Activated naive CD8-positive, alpha-beta T cell treated with anti-CD3 and anti-CD28 coated beads, Interleukin-2, amount 10 ng/mL, durations not matched to agents 7 days and 5 days (primary cell): ENCODE measurements at regions of chr3 and their contacts with region 1.

Region 1: DNA sequence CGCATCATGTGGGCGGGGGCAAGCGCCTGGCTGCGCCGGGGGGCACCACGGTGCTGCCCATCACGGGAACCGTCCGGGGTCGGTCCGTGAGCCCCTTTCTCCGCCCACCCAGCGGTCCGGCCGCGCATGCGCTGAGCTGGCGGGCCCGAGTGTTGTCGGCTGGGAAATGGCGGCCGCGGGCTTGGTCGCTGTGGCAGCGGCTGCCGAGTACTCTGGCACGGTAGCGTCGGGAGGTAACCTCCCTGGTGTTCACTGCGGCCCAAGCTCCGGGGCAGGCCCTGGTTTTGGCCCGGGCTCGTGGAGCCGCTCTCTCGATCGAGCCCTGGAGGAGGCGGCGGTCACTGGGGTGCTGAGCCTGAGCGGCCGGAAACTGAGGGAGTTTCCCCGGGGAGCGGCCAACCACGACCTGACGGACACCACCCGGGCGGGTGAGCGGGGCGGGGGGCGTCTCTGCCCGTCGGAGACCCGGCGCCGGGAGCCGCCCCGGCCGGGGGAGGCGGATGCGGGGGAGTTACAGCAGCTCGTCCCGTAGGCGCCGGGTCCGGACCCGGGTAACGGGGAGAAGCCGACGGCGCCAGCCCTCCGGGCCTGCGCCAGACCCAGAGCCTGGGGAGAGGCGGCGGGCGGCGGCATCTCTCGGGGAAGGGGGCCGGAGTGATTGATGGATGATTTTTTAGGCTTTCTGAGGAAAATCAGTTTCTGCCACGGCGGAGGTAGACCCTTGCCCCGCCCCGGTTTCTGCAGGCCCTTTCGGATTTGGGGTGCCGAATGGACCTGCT is at the start of gene LRCH3:
- DNase-seq: peak; percentile 93
- ATAC-seq: peak; percentile 74
- H3K4me3 Mint-ChIP-seq: peak within 1 kb of the TSS; percentile 97
- H3K27ac Mint-ChIP-seq: peak within 1 kb of the TSS; percentile 99
- H3K4me1 Mint-ChIP-seq: peaks cover 26% of the 10 kb centered on the region
- H3K27me3 Mint-ChIP-seq: no peaks in the 10 kb centered on the region
- total RNA-seq, gene LRCH3: 67.1 to 83.4 TPM

Region 2: DNA sequence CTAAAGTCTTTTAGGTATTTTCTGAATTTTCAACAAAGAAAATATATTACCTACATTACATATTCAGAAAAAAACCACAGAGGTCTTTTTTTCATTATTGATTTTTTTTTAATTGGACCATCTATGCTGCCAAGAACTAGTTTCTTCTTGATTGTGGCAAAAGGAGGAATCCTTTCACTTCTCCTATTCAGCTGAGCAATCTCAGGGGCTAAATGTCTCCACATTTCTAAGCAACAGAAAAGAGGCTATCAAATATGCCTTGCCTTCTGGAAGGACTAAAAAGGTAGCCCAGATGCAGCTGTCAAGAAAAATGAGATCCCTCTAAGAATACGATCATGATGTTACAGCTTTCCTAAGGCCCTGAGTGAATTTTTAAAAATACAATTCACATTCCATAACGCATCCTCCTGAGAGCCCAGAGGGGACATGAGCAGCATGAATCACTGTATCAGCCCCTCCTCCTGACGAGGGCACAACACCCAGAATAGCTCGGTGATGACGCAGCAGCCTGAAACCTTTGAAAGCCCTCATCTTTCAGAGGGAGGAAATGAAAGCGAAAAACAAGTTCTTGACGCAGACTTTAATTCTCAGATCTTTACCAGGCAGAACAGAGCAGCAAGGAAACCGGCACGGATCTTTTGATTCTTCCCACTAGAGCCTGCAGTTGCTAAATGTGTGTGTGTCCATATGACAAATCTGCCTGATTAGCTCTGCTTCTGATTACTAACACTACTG is 79.2 kb before region 1 on chr3:
- POLR2A ChIA-PET with region 1: interaction called, 13 read pairs
- DNase-seq: peak; percentile 65
- ATAC-seq: peak; percentile 100
- H3K4me3 Mint-ChIP-seq: peak overlapping the region; percentile 92
- H3K27ac Mint-ChIP-seq: peak overlapping the region; percentile 100
- H3K4me1 Mint-ChIP-seq: peaks cover 30% of the 10 kb centered on the region
- H3K27me3 Mint-ChIP-seq: no peaks in the 10 kb centered on the region

Region 3: DNA sequence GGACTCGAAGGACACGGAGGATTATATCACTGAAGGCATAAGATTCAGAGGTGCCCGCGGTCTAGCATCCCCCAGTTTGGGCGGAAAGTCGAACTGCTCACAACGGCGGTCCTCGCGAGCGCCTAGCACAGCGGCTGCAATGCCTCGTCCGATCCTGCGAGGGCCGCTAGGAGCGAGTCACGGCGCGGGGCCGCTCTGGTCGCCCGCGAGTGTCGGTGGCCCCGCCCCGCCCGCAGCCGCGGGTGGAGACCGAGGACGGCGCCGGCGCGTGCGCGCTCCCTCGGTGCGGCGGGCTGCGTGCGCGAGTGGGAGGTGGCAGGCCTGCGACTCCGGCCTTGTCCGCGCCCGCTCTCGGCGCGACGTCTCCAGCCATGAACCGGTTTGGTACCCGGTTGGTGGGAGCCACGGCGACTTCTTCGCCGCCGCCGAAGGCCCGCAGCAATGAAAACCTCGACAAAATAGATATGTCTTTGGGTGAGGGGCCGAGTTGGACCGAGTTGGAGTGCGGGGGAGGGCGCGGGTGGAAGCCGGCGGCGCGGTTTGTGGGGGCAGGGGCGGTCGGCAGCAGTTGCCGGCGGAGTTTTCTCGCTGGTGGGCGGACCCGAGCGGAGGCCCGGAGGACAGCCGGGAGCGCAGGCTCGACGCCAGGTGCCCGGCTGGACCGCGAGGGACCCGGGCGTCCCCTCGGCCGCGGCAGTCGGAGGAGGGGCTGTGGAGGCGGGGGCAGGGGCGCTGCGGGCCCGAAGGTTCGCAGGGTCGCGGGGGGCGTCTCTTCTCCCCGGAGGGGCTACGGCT is 41.5 kb before region 1 on chr3 and contains the start of gene FYTTD1:
- POLR2A ChIA-PET with region 1: interaction called, 13 read pairs
- DNase-seq: peak; percentile 90
- ATAC-seq: peak; percentile 86
- H3K4me3 Mint-ChIP-seq: peak within 1 kb of the TSS; percentile 96
- H3K27ac Mint-ChIP-seq: peak within 1 kb of the TSS; percentile 92
- H3K4me1 Mint-ChIP-seq: peaks cover 20% of the 10 kb centered on the region
- H3K27me3 Mint-ChIP-seq: no peaks in the 10 kb centered on the region
- total RNA-seq, gene FYTTD1: 38.0 to 48.8 TPM

Region 4: DNA sequence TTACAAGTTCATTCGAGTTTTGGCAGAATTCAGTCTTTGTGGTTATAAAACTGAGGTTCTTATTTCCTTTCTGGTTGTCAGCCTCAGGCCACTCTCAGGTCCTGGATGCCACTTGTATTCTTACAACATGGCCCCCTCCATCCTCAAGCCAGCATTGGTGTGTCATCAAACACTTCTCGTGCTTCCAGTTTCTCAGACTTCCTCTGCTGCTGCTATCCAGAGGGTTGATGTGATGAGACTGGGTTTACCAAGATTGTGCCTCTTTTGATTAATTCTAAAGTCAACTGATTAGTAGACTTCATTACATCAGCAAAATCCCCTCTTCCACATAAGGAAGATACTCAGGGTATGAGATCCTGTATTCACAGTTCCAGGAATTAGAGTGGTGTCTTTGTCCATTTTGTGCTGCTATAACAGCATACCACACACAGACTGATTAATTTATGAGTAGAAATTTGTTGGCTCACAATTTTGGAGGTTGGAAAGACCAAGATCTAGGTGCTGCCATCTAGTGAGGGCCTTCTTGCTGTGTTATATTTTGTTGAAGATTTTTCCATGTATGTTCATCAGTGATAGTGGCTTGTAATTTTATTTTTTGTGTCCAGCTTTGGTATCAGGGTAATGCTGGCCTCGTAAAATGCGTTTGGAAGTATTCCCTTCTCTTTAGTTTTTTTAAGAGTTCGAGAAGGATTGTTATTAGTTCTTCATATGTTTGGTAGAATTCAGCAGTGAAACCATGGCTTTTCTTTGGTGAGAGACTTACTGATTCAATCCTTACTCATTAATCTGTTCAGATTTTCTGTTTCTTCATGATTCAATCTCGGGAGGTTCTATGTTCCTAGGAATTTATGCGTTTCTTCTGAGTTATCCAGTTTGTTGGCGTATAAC is 10.8 kb after region 1 on chr3:
- POLR2A ChIA-PET with region 1: interaction called, 10 read pairs
- DNase-seq: no peak
- ATAC-seq: peak; percentile 77
- H3K4me3 Mint-ChIP-seq: peak overlapping the region; percentile 60
- H3K27ac Mint-ChIP-seq: peak overlapping the region; percentile 78
- H3K4me1 Mint-ChIP-seq: peaks cover 42% of the 10 kb centered on the region
- H3K27me3 Mint-ChIP-seq: no peaks in the 10 kb centered on the region

Region 5: DNA sequence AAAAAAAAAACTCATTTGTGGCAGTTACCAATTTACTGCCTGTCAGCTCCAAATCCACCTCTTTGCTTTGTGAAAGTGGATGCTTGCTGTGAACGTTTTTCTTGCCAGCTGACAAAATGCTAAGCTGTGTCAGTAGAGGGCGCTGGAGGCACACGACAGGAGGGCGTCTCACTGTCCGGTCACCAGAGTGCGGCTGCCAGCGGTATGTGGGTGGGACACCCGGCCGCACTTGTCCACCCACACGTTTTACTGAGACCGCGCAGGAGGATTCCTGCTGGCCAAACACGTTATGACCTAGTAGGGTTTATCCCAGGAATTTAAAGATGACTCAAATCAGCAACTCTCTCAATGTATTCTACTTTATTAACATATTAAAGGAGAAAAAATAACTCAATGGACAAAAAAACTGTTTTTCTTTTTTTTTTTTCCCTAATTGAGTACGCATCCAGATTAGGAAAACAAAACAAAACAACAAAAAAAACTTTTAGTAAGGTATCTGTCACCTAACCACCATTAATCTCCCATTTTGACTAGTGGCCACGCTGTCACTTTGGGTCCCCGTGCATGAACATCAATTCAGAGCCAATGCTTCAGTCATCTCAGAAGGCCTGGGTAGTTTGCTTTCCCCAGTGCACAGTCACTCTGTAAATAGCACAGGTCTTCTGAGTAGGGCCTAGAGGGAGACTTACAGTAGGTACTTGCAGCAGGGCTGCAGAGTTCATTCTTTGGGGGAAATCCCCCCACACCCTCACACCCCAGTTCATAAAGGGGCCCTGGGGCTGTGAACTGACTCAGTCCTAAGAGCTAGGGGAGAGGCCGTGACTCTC is 114.9 kb after region 1 on chr3:
- POLR2A ChIA-PET with region 1: no interaction called
- DNase-seq: peak; percentile 78
- ATAC-seq: peak; percentile 88
- H3K4me3 Mint-ChIP-seq: no peak overlapping the region
- H3K27ac Mint-ChIP-seq: no peak overlapping the region
- H3K4me1 Mint-ChIP-seq: peaks cover 6% of the 10 kb centered on the region
- H3K27me3 Mint-ChIP-seq: no peaks in the 10 kb centered on the region

Region 6: DNA sequence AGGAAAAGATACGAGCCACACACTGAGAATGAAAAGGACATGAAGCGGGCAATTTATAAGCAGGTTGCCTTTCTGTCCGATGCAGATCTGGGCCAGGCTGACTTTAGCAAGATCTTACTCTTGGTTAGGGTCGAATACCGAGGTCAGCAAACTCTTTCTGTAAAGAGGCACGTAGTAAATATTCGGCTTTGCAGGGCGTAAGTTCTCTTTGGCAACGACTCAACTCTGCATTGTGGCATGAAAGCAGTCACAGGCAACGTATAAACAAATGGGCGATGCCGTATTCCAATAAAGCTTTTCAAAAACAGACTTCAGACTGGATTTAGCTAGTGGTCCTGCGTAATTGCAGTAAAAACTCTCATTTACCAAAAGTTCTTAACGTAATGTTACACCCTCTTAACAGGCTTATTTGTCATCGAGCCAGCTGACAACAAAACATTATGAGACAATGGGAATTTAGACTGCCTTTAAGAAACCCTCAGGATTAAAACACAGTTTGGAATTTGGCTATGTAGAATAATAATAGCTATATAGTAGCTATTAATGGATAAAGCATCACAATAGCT is 145.6 kb after region 1 on chr3:
- POLR2A ChIA-PET with region 1: no interaction called
- DNase-seq: no peak
- ATAC-seq: no peak
- H3K4me3 Mint-ChIP-seq: no peak overlapping the region
- H3K27ac Mint-ChIP-seq: no peak overlapping the region
- H3K4me1 Mint-ChIP-seq: peaks cover 4% of the 10 kb centered on the region
- H3K27me3 Mint-ChIP-seq: no peaks in the 10 kb centered on the region